Endothelial cell of umbilical vein (primary cell): ENCODE measurements at regions of chr5 and their contacts with region 1.

Region 1: GRCh38 chr5:149960272-149961185 is at the start of gene SLC26A2:
- DNase-seq: peak; percentile 98
- H3K4me3 ChIP-seq: peak within 1 kb of the TSS; percentile 71 to 76 (median 74)
- H3K27ac ChIP-seq: peak within 1 kb of the TSS; percentile 85
- H3K4me1 ChIP-seq: peaks cover 21% of the 10 kb centered on the region
- H3K27me3 ChIP-seq: no peaks in the 10 kb centered on the region
- CTCF ChIP-seq: no peak
- POLR2A ChIP-seq: peak; percentile 88
- total RNA-seq, gene SLC26A2: 16.5 and 16.8 TPM in 2 replicates

Region 2: GRCh38 chr5:149834246-149834855 is 126.2 kb before region 1 on chr5:
- CTCF ChIA-PET with region 1: interaction called, 421 read pairs
- POLR2A ChIA-PET with region 1: interaction called, 3 read pairs
- dilution Hi-C with region 1: no loop called
- intact Hi-C with region 1: loop called (anchors 1 kb)
- DNase-seq: peak; percentile 86
- H3K4me3 ChIP-seq: no peak overlapping the region
- H3K27ac ChIP-seq: no peak overlapping the region
- H3K4me1 ChIP-seq: peaks cover 1% of the 10 kb centered on the region
- H3K27me3 ChIP-seq: no peaks in the 10 kb centered on the region
- CTCF ChIP-seq: peak; percentile 79 to 80
- POLR2A ChIP-seq: no peak

Region 3: GRCh38 chr5:149902177-149902576 is 58.4 kb before region 1 on chr5:
- CTCF ChIA-PET with region 1: interaction called, 85 read pairs
- POLR2A ChIA-PET with region 1: no interaction called
- dilution Hi-C with region 1: no loop called
- intact Hi-C with region 1: loop called (anchors 2 kb)
- DNase-seq: peak; percentile 19
- H3K4me3 ChIP-seq: no peak overlapping the region
- H3K27ac ChIP-seq: no peak overlapping the region
- H3K4me1 ChIP-seq: peaks cover 9% of the 10 kb centered on the region
- H3K27me3 ChIP-seq: no peaks in the 10 kb centered on the region
- CTCF ChIP-seq: peak in 1 of 2 donors; percentile 27
- POLR2A ChIP-seq: no peak

Region 4: DNA sequence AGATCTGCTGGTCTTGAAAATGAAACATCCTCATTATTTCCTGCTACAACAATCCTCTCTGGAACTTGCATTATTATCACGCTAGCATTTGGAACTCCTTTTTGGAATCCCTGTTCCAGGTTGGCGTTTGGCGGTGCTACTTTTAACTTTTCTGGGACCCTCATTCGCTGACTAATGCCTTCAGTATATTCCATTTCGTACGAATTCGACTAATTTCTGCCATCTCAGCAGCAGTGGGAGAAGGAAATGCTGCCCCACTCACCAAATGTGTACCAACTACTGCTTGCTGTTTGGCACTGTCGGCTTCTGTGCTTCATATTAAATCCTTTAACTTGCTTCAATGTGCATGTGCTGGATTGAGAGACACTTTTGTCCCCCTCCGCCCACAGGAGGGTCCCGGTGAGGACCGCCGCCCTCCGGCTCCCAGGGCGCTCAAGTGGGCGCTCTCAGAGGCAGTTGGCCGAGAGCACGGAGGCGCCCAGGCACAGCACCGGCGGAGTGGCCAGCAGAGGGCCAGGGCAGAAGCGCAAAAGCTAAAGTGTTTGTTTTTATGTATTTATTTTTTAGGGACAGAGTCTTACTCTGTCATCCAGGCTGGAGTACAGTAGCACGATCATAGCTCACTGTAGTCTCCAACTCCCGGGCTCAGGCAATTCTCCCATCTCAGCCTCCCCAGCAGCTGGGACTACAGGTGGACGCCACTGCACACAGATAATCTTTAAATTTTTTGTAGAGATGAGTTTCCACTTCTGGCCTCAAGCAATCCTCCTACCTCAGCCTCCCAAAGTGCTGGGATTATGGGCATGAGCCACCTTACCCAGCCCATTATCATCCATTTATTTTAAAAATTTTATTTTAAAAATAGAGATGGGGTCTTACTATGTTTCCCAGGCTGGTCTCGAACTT is 27.8 kb before region 1 on chr5:
- CTCF ChIA-PET with region 1: interaction called, 68 read pairs
- POLR2A ChIA-PET with region 1: interaction called, 5 read pairs
- dilution Hi-C with region 1: no loop called
- intact Hi-C with region 1: no loop called
- DNase-seq: no peak
- H3K4me3 ChIP-seq: no peak overlapping the region
- H3K27ac ChIP-seq: no peak overlapping the region
- H3K4me1 ChIP-seq: peaks cover 11% of the 10 kb centered on the region
- H3K27me3 ChIP-seq: peaks cover 0 to 2% of the 10 kb centered on the region in 2 experiments
- CTCF ChIP-seq: peak; percentile 34 to 48
- POLR2A ChIP-seq: no peak

Region 5: DNA sequence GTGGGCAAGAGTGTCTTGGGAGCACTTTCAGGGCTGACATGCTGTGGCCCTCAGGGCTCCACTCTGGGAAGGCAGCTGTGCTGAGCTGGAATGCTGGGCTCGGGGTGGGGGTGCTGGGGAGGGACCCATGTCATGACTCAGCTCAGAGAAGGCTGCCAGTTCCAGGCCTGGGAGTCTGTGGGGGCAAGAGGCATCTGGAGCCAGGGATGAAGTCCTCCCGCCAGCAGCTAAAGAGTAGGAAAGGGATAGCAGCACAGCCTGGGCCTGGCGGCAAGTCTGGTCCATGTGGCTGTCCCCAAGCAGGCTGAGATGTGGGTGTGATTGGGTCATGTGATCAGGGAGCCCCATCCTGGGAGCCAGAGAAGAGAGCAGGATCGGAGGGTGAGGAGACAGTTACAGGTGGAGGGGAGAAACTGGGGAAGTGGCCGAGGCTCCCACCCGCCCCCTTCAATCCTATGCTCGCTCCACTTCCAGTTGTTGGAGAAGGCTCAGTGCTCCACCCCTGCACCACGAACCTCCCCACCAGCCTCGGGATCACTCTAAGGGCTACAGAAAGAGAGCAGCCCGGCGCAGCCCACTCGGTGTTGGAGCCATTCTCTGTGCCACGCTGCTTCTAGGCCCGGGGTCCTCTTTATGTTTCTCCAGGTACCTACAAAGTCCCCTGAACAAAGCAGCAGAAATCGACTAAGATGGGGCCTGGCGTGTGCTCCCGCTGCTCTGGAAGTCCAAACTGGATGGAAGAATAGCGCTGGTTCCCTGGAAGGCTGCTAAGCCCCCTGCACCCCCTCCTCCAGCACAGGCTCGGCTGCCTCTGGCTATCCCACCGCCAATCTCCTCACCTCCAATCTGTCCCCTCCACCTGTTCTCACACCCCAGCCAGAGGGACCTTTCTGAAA is 183.1 kb after region 1 on chr5:
- CTCF ChIA-PET with region 1: no interaction called
- POLR2A ChIA-PET with region 1: no interaction called
- dilution Hi-C with region 1: no loop called
- intact Hi-C with region 1: no loop called
- DNase-seq: no peak
- H3K4me3 ChIP-seq: no peak overlapping the region
- H3K27ac ChIP-seq: no peak overlapping the region
- H3K4me1 ChIP-seq: peaks cover 12% of the 10 kb centered on the region
- H3K27me3 ChIP-seq: no peaks in the 10 kb centered on the region
- CTCF ChIP-seq: no peak
- POLR2A ChIP-seq: no peak